Heart right ventricle (tissue), 16 donors: ENCODE measurements at regions of chr1 and their contacts with region 1.

Region 1: DNA sequence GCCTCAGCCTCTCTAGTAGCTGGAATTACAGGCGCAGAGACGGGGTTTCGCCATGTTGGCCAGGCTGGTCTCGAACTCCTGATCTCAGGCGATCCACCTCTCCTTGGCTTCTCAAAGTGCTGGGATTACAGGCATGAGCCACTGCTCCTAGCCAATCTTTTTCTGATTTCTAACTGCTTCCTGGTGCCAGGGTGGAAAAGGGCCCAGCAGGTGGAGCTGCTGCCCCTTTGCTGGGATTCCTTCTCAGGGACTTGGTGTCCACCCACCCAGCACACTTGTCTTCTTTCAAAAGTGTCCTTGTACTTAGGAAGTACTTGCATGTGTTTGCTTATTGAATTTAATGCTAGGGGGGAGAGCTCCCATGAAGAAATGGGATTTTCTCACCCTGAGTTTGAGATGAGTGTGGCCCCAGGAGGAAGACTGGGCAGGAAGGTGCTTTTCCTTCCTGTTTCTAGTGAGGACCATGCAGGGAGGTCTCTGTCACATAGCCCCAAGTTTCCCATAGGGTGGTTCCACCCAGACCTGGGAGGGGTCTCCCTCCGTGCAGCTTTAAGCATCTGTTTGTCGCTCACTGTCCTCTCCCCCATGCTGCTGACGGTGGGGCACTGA is 14.2 kb downstream of the UTP11 start:
- DNase-seq: peak in 1 of 2 donors; percentile 35
- ATAC-seq: peak in 1 of 8 donors; percentile 17
- H3K4me3 ChIP-seq: no peak overlapping the region
- H3K27ac ChIP-seq: no peak overlapping the region
- H3K4me1 ChIP-seq: peaks cover 11 to 42% (median 26%) of the 10 kb centered on the region in 9 donors
- H3K27me3 ChIP-seq: no peaks in the 10 kb centered on the region
- CTCF ChIP-seq: peak; percentile 18 to 66 (median 55)

Region 2: DNA sequence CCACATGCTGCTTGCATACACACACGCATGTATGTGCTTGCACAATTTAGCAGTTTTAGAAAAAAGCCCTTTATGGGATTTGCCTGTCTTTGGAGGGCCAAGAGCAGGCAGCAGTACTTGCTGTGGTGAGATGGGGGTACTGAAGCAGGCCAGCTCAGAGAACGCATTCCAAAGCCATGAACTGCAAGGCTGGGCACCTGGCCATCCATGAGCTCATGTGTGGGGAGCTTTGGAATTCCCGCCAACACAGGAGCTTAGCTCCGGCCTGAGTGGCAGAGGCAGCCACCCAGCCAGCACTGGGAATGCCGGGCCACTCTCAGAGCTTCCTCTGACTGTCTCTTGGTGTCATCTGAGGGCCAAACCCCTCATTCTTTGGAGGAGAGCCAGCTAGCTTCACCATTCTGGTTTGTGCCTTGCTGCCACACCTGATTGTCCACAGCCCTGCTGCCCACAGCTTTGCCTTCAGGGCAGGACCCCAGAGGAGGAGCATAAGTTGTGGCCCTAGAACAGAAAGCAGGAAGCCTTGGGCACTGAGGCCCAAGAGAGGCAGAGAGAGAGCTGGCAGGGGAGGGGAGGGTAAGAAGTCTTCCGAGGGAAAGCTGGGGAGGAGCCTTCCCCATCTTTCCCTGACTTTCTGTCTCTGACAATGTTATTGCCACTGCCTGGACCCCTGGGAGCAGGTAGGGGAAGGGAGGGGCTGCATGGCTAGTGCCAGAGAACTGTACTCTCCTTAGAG is 112.0 kb after region 1 on chr1:
- intact Hi-C with region 1: no loop called
- DNase-seq: peak; percentile 80 to 86
- ATAC-seq: peak; percentile 91 to 99 (median 95)
- H3K4me3 ChIP-seq: no peak overlapping the region
- H3K27ac ChIP-seq: peak overlapping the region in 5 of 10 donors; percentile 24 to 58 (median 41)
- H3K4me1 ChIP-seq: peaks cover 0 to 32% (median 14%) of the 10 kb centered on the region in 9 donors
- H3K27me3 ChIP-seq: peaks cover 0 to 91% (median 61%) of the 10 kb centered on the region in 7 donors
- CTCF ChIP-seq: peak in 4 of 9 donors; percentile 12 to 46 (median 30)

Region 3: DNA sequence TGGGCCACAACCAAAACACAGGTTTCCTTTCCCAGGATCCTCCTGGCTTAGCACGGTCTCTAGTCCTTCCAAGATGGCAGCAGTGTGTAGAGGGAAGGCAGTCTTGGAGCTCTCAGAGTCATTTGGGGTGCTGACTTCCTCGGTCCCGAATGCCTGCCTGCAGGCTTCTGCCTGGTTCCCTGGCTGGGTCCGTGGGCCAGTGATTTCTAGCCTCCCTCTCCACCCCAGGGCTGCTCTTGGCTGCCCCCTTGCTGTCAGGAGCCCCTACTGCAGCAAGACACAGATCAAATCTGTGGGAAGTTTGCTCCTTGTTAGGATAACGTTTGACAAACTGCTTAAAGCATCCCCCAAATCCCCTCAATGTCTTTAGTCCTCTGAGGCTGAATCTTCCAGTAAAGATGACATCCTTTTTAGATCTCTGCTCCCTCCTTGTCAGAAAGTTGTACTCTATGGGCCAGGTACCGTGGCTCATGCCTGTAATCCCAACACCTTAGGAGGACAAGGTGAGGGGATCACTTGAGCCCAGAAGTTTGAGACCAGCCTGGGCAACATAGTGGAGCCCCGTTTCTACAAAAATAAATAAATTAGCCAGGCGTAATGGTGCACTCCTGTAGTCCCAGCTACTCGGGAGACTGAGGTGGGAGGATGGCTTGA is 560.4 kb after region 1 on chr1:
- intact Hi-C with region 1: loop called in 1 of 10 experiments (anchors 10 kb)
- DNase-seq: peak in 1 of 2 donors; percentile 34
- ATAC-seq: peak in 7 of 8 donors; percentile 42 to 62 (median 53)
- H3K4me3 ChIP-seq: no peak overlapping the region
- H3K27ac ChIP-seq: no peak overlapping the region
- H3K4me1 ChIP-seq: peaks cover 0 to 8% (median 0%) of the 10 kb centered on the region in 9 donors
- H3K27me3 ChIP-seq: peaks cover 0 to 16% (median 5%) of the 10 kb centered on the region in 7 donors
- CTCF ChIP-seq: peak; percentile 51 to 89 (median 78)